Thyroid gland (tissue), 4 donors: ENCODE measurements at regions of chr16 and their contacts with region 1.

Region 1: GRCh38 chr16:58020628-58021139 is 4.9 kb upstream of the MMP15 start:
- DNase-seq: peak; percentile 75 to 76
- H3K4me3 ChIP-seq: no peak overlapping the region
- H3K27ac ChIP-seq: no peak overlapping the region
- H3K4me1 ChIP-seq: peaks cover 31 to 35% of the 10 kb centered on the region in 2 donors
- H3K27me3 ChIP-seq: no peaks in the 10 kb centered on the region
- CTCF ChIP-seq: peak; percentile 72 to 97 (median 86)
- POLR2A ChIP-seq: no peak

Region 2: DNA sequence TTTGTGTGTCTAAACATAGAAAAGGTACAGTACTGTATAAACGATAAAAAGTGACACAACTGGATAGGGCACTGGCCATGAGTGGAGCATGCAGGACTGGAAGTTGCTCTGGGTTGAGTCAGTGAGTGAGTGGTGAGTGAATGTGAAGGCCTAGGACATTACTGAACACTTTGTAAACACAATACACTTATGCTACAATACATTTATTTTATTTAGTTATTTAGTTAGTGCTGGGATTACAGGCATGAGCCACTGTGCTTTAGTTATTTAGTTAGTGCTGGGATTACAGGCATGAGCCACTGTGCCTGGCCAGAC is 103.9 kb after region 1 on chr16:
- intact Hi-C with region 1: loop called (anchors 5 kb)
- DNase-seq: peak in 1 of 2 donors; percentile 14
- H3K4me3 ChIP-seq: no peak overlapping the region
- H3K27ac ChIP-seq: no peak overlapping the region
- H3K4me1 ChIP-seq: peaks cover 57 to 61% of the 10 kb centered on the region in 2 donors
- H3K27me3 ChIP-seq: no peaks in the 10 kb centered on the region
- CTCF ChIP-seq: no peak
- POLR2A ChIP-seq: no peak

Region 3: DNA sequence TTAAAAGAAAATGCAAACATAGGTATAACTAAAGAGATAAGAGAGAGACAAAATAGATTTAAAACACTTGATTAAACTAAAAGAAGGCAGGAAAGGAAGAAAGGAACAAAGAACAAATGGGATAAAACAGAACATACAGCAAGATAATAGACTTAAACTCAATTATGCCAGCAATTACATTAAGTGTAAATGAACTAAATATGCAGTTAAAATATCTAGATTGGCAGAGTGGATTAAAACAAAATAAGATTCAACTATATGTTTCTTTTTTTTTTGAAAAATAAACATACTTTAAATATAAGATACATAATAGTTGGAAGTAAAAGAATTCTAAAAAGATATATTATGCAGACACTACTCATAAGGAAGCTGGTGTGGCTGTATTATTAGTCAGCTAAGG is 118.2 kb after region 1 on chr16:
- intact Hi-C with region 1: no loop called
- DNase-seq: no peak
- H3K4me3 ChIP-seq: no peak overlapping the region
- H3K27ac ChIP-seq: no peak overlapping the region
- H3K4me1 ChIP-seq: no peaks in the 10 kb centered on the region
- H3K27me3 ChIP-seq: no peaks in the 10 kb centered on the region
- CTCF ChIP-seq: no peak
- POLR2A ChIP-seq: no peak